Colonic mucosa (tissue), 4 donors: ENCODE measurements at regions of chr9 and their contacts with region 1.

Region 1: GRCh38 chr9:29290516-29290915 is 1717.2 kb upstream of the C9orf72 start:
- DNase-seq: no peak
- H3K4me3 ChIP-seq: no peak overlapping the region
- H3K27ac ChIP-seq: no peak overlapping the region
- H3K4me1 ChIP-seq: no peaks in the 10 kb centered on the region
- H3K27me3 ChIP-seq: no peaks in the 10 kb centered on the region
- CTCF ChIP-seq: no peak

Region 2: DNA sequence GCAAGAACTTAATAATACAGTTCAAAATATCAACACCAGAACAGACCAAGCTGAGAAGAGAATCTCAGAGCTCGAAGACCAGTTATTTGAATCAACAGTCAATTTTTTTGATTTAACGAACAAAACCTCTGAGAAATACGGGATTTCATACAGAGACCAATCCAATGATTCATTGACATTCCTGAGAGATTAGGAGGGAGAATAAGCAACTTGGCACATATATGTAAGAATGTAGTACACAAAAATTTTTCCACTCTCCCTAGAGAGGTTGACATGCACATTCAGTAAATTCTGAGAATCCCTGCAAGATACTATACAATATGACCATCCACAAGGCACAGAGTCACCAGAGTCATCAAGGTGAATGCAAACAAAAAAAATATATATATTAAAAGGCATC is 139.9 kb before region 1 on chr9:
- intact Hi-C with region 1: no loop called
- DNase-seq: no peak
- H3K4me3 ChIP-seq: no peak overlapping the region
- H3K27ac ChIP-seq: no peak overlapping the region
- H3K4me1 ChIP-seq: no peaks in the 10 kb centered on the region
- H3K27me3 ChIP-seq: no peaks in the 10 kb centered on the region
- CTCF ChIP-seq: no peak

Region 3: DNA sequence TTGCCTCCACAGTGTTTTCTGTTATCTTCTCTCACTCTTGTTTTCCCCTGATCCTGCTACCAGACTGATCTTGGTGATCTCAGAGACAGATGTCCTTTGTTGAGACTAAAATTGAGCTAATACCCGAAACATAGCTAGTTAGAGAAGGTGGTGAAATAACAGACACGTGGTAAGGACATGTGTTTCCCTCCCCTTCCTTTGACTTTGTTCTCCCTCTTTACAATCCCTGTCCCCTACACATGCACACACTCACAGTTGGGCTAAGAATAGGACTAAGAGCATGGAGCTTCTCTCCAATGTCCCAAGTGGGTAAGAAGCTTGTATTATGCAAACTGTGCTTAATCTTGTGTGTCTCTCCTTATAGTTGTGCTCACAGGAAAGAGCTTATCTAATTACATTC is 114.3 kb before region 1 on chr9:
- intact Hi-C with region 1: no loop called
- DNase-seq: no peak
- H3K4me3 ChIP-seq: no peak overlapping the region
- H3K27ac ChIP-seq: no peak overlapping the region
- H3K4me1 ChIP-seq: no peaks in the 10 kb centered on the region
- H3K27me3 ChIP-seq: no peaks in the 10 kb centered on the region
- CTCF ChIP-seq: no peak

Region 4: GRCh38 chr9:29514336-29514735 is 223.8 kb after region 1 on chr9:
- intact Hi-C with region 1: loop called (anchors 10 kb)
- DNase-seq: no peak
- H3K4me3 ChIP-seq: no peak overlapping the region
- H3K27ac ChIP-seq: no peak overlapping the region
- H3K4me1 ChIP-seq: no peaks in the 10 kb centered on the region
- H3K27me3 ChIP-seq: no peaks in the 10 kb centered on the region
- CTCF ChIP-seq: no peak